ENCODE measurements at regions of chr11 and their contacts with region 1.

Region 1: GRCh38 chr11:58579192-58580129 is 598 bp downstream of the ZFP91 start:
- DNase-seq: peak; percentile 88
- H3K4me3 Mint-ChIP-seq: peak overlapping the region; percentile 95
- H3K27ac Mint-ChIP-seq: peak overlapping the region; percentile 100
- H3K4me1 Mint-ChIP-seq: peaks cover 48% of the 10 kb centered on the region
- H3K27me3 Mint-ChIP-seq: no peaks in the 10 kb centered on the region

Region 2: GRCh38 chr11:57657194-57658022 is 922.1 kb before region 1 on chr11 and contains the start of gene CLP1:
- intact Hi-C with region 1: loop called (anchors 1 kb)
- DNase-seq: peak; percentile 99
- H3K4me3 Mint-ChIP-seq: peak within 1 kb of the TSS; percentile 99
- H3K27ac Mint-ChIP-seq: peak within 1 kb of the TSS; percentile 94
- H3K4me1 Mint-ChIP-seq: peaks cover 26% of the 10 kb centered on the region
- H3K27me3 Mint-ChIP-seq: no peaks in the 10 kb centered on the region
- total RNA-seq, gene CLP1: 17.7 and 19.9 TPM in 2 replicates

Region 3: DNA sequence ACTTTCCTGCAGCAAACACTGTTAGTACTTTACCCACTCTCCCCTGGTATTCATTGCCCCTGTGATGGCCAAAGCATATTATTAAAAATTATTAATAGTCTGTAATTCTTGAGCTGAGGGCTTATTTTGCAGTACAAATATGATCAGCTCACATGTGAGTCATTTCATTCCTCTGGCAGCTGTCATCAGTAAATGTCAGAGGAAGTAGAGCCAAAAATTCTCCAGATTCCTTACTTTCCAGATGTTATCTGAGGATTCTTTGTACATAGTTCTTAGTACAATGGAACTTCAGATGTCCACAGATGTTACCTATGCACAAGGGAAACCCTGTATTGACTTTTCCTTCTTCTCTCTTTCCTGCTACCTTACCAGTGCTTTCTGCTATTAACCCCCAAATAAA is 185.3 kb before region 1 on chr11:
- intact Hi-C with region 1: loop called (anchors 5 kb)
- DNase-seq: no peak
- H3K4me3 Mint-ChIP-seq: no peak overlapping the region
- H3K27ac Mint-ChIP-seq: no peak overlapping the region
- H3K4me1 Mint-ChIP-seq: peaks cover 2% of the 10 kb centered on the region
- H3K27me3 Mint-ChIP-seq: no peaks in the 10 kb centered on the region

Region 4: DNA sequence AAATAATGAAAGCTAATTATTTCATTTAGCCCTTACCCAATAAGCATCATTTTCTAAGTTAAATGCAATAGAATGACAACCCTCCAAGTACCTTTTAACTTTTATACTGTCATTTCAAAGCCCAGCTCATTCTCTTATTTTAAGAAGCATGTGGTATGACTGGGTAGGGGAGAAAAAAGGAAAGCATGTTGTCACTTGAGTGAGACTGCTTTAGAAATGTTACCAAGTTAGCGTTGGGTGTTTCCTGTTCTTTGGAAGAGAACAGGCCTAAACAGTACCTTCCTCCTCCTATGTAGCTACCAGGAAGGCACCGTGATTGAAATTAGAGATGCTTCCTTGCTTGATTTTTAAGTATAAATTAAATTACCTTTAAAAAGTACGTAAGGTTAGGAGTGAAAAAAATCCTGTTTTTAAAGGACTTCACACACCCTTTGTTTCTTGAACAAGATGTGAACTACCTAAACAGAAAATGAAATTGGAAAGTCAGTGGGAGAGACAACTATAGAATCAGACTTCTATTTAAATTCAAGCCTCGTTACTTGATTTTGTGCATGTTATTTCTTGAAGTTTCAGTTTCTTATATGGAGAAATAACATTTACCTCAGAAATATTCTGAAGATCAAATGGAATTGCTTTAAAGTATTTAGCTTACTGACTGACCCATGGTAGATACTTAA is 42.3 kb after region 1 on chr11:
- intact Hi-C with region 1: loop called (anchors 1 kb)
- DNase-seq: no peak
- H3K4me3 Mint-ChIP-seq: no peak overlapping the region
- H3K27ac Mint-ChIP-seq: peak overlapping the region; percentile 73
- H3K4me1 Mint-ChIP-seq: peaks cover 28% of the 10 kb centered on the region
- H3K27me3 Mint-ChIP-seq: no peaks in the 10 kb centered on the region

Region 5: DNA sequence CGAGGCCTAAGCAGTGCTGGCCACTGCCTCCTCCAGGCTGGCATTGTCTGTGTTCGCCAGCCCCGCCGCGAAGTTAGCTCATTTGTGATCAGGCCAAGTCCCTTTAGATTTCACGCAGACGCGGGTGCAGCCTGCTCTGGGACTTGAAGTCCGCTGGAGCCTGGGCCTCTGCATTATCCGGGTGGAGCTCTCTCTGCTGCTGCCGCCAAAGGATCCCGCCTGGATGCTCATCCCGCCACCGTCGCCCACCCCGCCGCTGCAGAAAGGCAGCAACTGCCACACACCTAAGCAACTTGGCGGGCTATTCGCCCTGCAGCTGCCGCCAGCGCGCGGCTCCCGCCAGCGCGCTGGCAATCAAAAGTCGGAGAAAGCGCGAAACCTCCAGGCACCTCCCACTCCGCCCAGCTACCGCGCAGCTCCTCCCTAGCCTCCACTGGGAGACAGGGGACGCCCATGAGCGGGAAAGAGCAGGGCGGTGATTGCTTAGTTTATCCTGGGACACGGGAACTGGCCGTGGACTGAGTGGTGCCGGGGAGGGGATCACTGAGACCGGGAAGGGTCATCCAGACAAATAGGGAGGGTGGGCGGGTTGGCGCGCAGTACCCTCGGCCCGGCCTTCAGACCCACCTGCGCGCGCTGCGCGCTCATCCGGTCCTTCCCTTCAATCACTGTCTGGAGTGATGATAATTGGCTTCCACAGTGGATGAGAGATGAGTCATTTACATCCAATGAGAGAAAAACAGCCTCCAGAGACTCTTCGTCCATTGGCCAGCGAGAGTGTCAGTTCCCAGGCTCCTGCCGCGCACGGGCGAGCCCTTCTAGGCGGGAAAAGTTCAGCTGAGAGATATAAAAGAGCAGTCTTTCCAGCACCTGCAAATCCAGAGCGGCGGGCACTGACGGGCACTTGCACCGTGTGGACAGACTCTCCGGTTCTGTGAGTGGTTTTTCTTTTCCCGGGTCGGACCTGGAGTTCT is 527.2 kb after region 1 on chr11 and contains the start of gene FAM111B:
- intact Hi-C with region 1: loop called (anchors 2 kb)
- DNase-seq: peak; percentile 79
- H3K4me3 Mint-ChIP-seq: peak within 1 kb of the TSS; percentile 93
- H3K27ac Mint-ChIP-seq: peak within 1 kb of the TSS; percentile 51
- H3K4me1 Mint-ChIP-seq: peaks cover 66% of the 10 kb centered on the region
- H3K27me3 Mint-ChIP-seq: no peaks in the 10 kb centered on the region
- total RNA-seq, gene FAM111B: 57.6 and 59.4 TPM in 2 replicates

Region 6: GRCh38 chr11:59335001-59335400 is 755.5 kb after region 1 on chr11:
- intact Hi-C with region 1: no loop called
- DNase-seq: no peak
- H3K4me3 Mint-ChIP-seq: no peak overlapping the region
- H3K27ac Mint-ChIP-seq: no peak overlapping the region
- H3K4me1 Mint-ChIP-seq: no peaks in the 10 kb centered on the region
- H3K27me3 Mint-ChIP-seq: no peaks in the 10 kb centered on the region

Measured in activated T-helper 2 cell treated with anti-CD3 and anti-CD28 coated beads, Interferon-gamma antibody, Interleukin-2, Interleukin-4, amounts not matched to agents 10 μg/mL and 5 μg/mL and 100 μg/mL, durations not matched to agents 14 hours and 24 hours and 36 hours (primary cell).